K562 (cell line): ENCODE measurements at regions of chr6 and their contacts with region 1.

Region 1: GRCh38 chr6:31619805-31620585 is 520 bp upstream of the PRRC2A start:
- DNase-seq: peak; percentile 93 to 100 (median 97)
- ATAC-seq: peak; percentile 92
- H3K4me3 ChIP-seq: peak overlapping the region; percentile 96
- H3K27ac ChIP-seq: peak overlapping the region; percentile 98
- H3K4me1 ChIP-seq: peaks cover 28 to 37% of the 10 kb centered on the region in 2 experiments
- H3K27me3 ChIP-seq: no peaks in the 10 kb centered on the region
- CTCF ChIP-seq: no peak; a peak in 1 of 6 replicates
- EP300 ChIP-seq: peak; percentile 71
- POLR2A ChIP-seq: peak; percentile 99
- RAD21 ChIP-seq: peak in 1 of 2 experiments; percentile 18; a peak in 1 of 4 replicates

Region 2: DNA sequence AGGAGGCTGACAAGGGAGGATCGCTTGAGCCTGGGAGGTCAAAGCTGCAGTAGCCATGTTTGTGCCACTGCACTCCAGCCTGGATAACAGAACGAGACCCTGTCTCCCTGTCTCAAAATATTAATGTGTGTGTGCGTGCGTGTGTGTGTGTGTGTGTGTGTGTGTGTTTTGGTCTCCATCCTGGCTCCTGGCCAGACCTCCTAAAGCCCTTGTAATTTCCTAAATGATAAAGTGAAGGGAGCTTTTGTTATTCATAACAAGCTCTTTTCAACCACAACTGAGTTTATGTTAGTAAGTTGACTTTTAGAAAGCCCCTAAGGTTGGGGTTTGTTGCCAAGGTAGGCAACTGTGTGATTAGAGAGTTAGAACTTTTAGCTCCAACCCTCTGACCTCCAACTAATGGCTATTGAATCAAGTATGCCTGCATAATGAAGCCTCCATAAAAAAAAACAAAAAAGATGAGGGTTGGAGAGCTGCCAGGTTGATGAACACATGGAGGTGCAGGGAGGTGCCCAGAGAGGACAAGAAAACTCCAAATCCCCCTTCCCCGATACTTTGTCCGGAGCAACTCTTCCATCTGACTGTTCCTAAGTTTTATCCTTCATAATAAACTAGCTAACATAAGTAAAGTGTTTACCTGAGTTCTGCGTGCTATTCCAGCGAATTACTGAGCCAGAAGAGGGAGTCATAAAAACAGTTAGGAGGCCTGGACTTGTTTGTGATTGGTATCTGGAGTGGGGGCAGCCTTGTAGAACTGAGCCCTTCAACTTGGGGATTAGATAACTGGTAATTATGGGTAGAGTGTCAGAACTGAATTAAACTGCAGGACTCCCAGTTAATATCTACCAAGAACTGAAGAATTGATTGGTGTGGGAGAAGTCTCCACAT is 10.2 kb before region 1 on chr6:
- CTCF ChIA-PET with region 1: no interaction called
- POLR2A ChIA-PET with region 1: interaction called, 16 read pairs
- in situ Hi-C with region 1: no loop called
- intact Hi-C with region 1: no loop called
- DNase-seq: peak in 1 of 4 experiments; percentile 42
- ATAC-seq: peak; percentile 65
- H3K4me3 ChIP-seq: no peak overlapping the region
- H3K27ac ChIP-seq: peak overlapping the region; percentile 42; the same call in 2 of the 3 replicates
- H3K4me1 ChIP-seq: peaks cover 13 to 22% of the 10 kb centered on the region in 2 experiments
- H3K27me3 ChIP-seq: no peaks in the 10 kb centered on the region
- CTCF ChIP-seq: peak in 2 of 3 experiments; percentile 9 to 27; a peak in 2 of 6 replicates
- EP300 ChIP-seq: no peak
- POLR2A ChIP-seq: no peak
- RAD21 ChIP-seq: peak in 1 of 2 experiments; percentile 42; a peak in 1 of 4 replicates

Region 3: DNA sequence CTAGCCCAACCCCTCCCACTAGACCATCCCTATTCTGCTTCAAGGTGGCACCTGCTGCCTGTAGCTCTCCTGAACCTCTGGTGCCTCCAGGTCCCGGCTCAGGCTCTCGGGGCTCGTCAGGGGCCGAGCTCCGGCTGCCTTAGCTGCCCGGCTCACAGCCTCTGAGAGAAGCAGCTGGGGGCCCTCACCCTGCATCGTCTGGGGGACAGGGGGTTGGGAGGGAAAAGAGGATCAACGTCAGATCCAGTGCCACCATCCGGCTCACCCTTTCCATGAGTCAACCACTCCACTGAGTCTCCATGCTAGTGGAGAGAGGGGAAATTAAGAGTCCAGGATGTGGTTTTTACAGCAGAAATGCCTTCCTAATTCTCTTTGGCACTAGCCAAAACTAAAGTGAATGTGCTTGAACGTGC is 19.5 kb after region 1 on chr6:
- CTCF ChIA-PET with region 1: no interaction called
- POLR2A ChIA-PET with region 1: interaction called, 274 read pairs
- in situ Hi-C with region 1: no loop called
- intact Hi-C with region 1: no loop called
- DNase-seq: no peak
- ATAC-seq: no peak
- H3K4me3 ChIP-seq: no peak overlapping the region
- H3K27ac ChIP-seq: no peak overlapping the region
- H3K4me1 ChIP-seq: peaks cover 3 to 13% of the 10 kb centered on the region in 2 experiments; a peak in 4 of 5 replicates
- H3K27me3 ChIP-seq: no peaks in the 10 kb centered on the region
- CTCF ChIP-seq: no peak
- EP300 ChIP-seq: no peak
- POLR2A ChIP-seq: no peak
- RAD21 ChIP-seq: no peak